ENCODE measurements at regions of chr12 and their contacts with region 1.

Region 1: GRCh38 chr12:2783936-2784600 is 10.7 kb upstream of the FKBP4 start:
- DNase-seq: peak in 1 of 2 experiments; percentile 88
- H3K4me3 ChIP-seq: no peak overlapping the region; a peak in 1 of 8 replicates
- H3K27ac ChIP-seq: no peak overlapping the region
- H3K4me1 ChIP-seq: peaks cover 2 to 5% (median 3%) of the 10 kb centered on the region in 4 experiments; a peak in 6 of 7 replicates
- H3K27me3 ChIP-seq: no peaks in the 10 kb centered on the region; a peak in 1 of 7 replicates
- CTCF ChIP-seq: peak; percentile 93 to 97 (median 96)
- EP300 ChIP-seq: no peak
- POLR2A ChIP-seq: no peak
- RAD21 ChIP-seq: peak; percentile 90 to 97

Region 2: DNA sequence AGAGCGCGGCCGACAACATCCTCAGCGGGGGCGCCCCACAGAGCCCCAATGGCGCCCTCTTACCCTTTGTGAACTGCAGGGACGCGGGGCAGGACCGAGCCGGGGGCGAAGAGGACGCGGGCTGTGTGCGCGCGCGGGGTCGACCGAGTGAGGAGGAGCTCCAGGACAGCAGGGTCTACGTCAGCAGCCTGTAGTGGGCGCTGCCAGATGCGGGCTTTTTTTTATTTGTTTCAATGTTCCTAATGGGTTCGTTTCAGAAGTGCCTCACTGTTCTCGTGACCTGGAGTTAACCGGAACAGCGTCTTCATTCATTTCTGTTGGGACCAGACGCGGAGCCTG is 93.1 kb before region 1 on chr12:
- CTCF ChIA-PET with region 1: interaction called, 43 read pairs
- POLR2A ChIA-PET with region 1: interaction called, 3 read pairs
- DNase-seq: no peak
- H3K4me3 ChIP-seq: peak overlapping the region; percentile 54 to 82 (median 62)
- H3K27ac ChIP-seq: no peak overlapping the region
- H3K4me1 ChIP-seq: peaks cover 0 to 8% (median 4%) of the 10 kb centered on the region in 4 experiments; a peak in 4 of 7 replicates
- H3K27me3 ChIP-seq: peaks cover 0 to 7% (median 6%) of the 10 kb centered on the region in 4 experiments; a peak in 3 of 7 replicates
- CTCF ChIP-seq: peak in 2 of 3 experiments; percentile 34 to 36; a peak in 3 of 4 replicates
- EP300 ChIP-seq: no peak
- POLR2A ChIP-seq: no peak
- RAD21 ChIP-seq: 0 out of 4 replicates have a peak, but pooled peaks of 1 of the 2 experiments have one; percentile 5

Region 3: DNA sequence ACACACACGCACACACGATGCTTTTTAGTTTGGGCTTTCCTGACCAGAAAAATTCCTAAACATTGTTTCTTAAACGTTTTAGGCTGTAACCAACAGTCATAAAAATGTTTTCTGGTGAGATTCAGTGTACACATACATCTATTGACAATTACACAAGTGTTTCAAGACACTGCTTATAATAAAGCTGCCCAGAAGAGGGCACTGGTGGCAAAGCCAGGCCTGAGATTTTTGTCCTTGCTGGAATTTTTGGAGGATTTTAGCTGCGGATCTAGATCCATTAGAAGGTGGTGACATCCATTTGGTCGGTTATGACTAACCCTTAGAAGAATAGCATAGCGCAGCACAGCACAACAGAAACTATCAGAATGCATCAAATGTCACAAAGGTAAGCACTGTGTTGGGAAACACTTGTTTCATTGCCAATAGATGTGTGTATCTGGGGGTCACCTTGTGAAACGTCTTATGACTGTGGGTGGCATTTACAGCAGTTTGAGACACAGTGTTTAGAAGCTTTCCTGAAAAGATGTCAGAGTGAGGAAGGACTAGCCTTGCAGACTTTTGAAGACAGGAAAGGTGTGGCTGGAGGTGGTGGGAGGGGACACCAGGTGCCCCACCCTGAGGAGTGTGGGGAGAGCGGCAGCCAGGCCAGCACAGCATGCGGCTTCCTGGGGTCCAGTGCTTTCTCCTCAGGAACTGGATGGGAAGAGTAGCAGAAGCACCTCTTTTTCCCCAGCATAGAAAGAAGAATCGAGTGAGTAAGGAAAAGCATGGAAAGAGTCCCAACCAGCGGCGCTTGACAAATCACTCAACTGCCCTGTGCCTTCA is 44.0 kb before region 1 on chr12:
- CTCF ChIA-PET with region 1: interaction called, 175 read pairs
- POLR2A ChIA-PET with region 1: interaction called, 10 read pairs
- DNase-seq: no peak
- H3K4me3 ChIP-seq: no peak overlapping the region
- H3K27ac ChIP-seq: no peak overlapping the region
- H3K4me1 ChIP-seq: peaks cover 0 to 3% (median 0%) of the 10 kb centered on the region in 4 experiments; a peak in 3 of 7 replicates
- H3K27me3 ChIP-seq: peaks cover 0 to 3% (median 0%) of the 10 kb centered on the region in 4 experiments; a peak in 1 of 7 replicates
- CTCF ChIP-seq: peak in 2 of 3 experiments; percentile 71 to 83; a peak in 3 of 4 replicates
- EP300 ChIP-seq: no peak
- POLR2A ChIP-seq: no peak
- RAD21 ChIP-seq: peak; percentile 86 to 93

Region 4: GRCh38 chr12:2759733-2760132 is 24.3 kb before region 1 on chr12:
- CTCF ChIA-PET with region 1: interaction called, 19 read pairs
- POLR2A ChIA-PET with region 1: interaction called, 3 read pairs
- DNase-seq: no peak
- H3K4me3 ChIP-seq: no peak overlapping the region
- H3K27ac ChIP-seq: no peak overlapping the region
- H3K4me1 ChIP-seq: peaks cover 0 to 2% (median 0%) of the 10 kb centered on the region in 4 experiments; a peak in 3 of 7 replicates
- H3K27me3 ChIP-seq: peaks cover 0 to 1% (median 0%) of the 10 kb centered on the region in 4 experiments; a peak in 1 of 7 replicates
- CTCF ChIP-seq: no peak
- EP300 ChIP-seq: no peak
- POLR2A ChIP-seq: no peak
- RAD21 ChIP-seq: no peak

Region 5: GRCh38 chr12:2794736-2795289 is 10.7 kb after region 1 on chr12 and contains the start of gene FKBP4:
- CTCF ChIA-PET with region 1: interaction called, 34 read pairs
- POLR2A ChIA-PET with region 1: interaction called, 12 read pairs
- DNase-seq: peak; percentile 63 to 89
- H3K4me3 ChIP-seq: peak within 1 kb of the TSS; percentile 59 to 73 (median 66)
- H3K27ac ChIP-seq: no peak within 1 kb of the TSS
- H3K4me1 ChIP-seq: peaks cover 4 to 6% (median 5%) of the 10 kb centered on the region in 4 experiments; a peak in 5 of 7 replicates
- H3K27me3 ChIP-seq: peaks cover 0 to 6% (median 4%) of the 10 kb centered on the region in 4 experiments; a peak in 6 of 7 replicates
- CTCF ChIP-seq: no peak
- EP300 ChIP-seq: 0 out of 3 replicates have a peak, but pooled peaks of 1 of the 2 experiments have one; percentile 18
- POLR2A ChIP-seq: peak; percentile 38 to 73
- RAD21 ChIP-seq: no peak
- total RNA-seq, gene FKBP4: 227 and 243 TPM in 2 replicates

Region 6: GRCh38 chr12:2812290-2813213 is 28.5 kb after region 1 on chr12 and contains the start of gene ITFG2:
- CTCF ChIA-PET with region 1: interaction called, 14 read pairs
- POLR2A ChIA-PET with region 1: interaction called, 5 read pairs
- DNase-seq: peak; percentile 96
- H3K4me3 ChIP-seq: peak within 1 kb of the TSS; percentile 52 to 94 (median 72)
- H3K27ac ChIP-seq: peak within 1 kb of the TSS; percentile 97
- H3K4me1 ChIP-seq: peaks cover 0 to 3% (median 0%) of the 10 kb centered on the region in 4 experiments; a peak in 3 of 7 replicates
- H3K27me3 ChIP-seq: no peaks in the 10 kb centered on the region
- CTCF ChIP-seq: no peak
- EP300 ChIP-seq: peak in 1 of 2 experiments; percentile 37; a peak in 1 of 3 replicates
- POLR2A ChIP-seq: peak; percentile 91 to 99
- RAD21 ChIP-seq: no peak
- total RNA-seq, gene ITFG2: 22.9 and 23.0 TPM in 2 replicates

Region 7: GRCh38 chr12:2862876-2863275 is 78.8 kb after region 1 on chr12:
- CTCF ChIA-PET with region 1: no interaction called
- POLR2A ChIA-PET with region 1: no interaction called
- DNase-seq: no peak
- H3K4me3 ChIP-seq: no peak overlapping the region
- H3K27ac ChIP-seq: no peak overlapping the region
- H3K4me1 ChIP-seq: no peaks in the 10 kb centered on the region
- H3K27me3 ChIP-seq: no peaks in the 10 kb centered on the region
- CTCF ChIP-seq: no peak
- EP300 ChIP-seq: no peak
- POLR2A ChIP-seq: no peak
- RAD21 ChIP-seq: no peak

Measured in H1 (cell line).